ENCODE measurements at regions of chr6 and their contacts with region 1.

Region 1: DNA sequence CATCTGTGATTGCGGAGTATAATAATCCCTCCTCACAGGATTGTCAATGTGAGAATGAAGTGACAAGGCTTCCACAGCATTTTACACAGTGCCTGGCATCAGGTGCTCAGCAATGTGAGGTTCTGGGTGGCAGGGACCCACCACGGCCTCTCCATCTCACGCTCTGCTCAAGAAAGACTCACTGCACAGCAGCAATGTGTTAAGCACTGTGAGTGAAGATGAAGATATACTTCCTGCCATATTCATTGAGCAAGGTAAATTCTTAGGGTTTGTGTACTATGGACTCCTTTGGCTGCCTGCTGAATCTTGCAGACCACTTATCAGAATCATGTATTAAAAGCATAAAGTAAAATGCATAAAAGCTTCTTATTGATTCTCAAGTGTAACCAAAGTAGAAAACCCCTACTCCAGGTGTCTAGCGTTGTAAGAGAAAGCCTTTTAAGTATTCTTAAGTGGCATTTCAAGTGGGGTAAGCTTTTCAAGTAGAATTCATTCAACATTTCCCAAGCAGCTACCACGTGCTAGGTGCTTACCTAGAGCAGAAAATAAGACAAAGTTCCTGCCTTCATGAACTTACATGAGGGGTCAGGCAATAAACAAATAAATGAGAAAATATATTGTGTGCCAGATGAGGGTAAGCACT is 17.0 kb upstream of the MEP1A start:
- DNase-seq: no peak
- H3K4me3 ChIP-seq: no peak overlapping the region
- H3K27ac ChIP-seq: no peak overlapping the region
- H3K4me1 ChIP-seq: no peaks in the 10 kb centered on the region
- H3K27me3 ChIP-seq: no peaks in the 10 kb centered on the region
- CTCF ChIP-seq: no peak
- POLR2A ChIP-seq: no peak

Region 2: DNA sequence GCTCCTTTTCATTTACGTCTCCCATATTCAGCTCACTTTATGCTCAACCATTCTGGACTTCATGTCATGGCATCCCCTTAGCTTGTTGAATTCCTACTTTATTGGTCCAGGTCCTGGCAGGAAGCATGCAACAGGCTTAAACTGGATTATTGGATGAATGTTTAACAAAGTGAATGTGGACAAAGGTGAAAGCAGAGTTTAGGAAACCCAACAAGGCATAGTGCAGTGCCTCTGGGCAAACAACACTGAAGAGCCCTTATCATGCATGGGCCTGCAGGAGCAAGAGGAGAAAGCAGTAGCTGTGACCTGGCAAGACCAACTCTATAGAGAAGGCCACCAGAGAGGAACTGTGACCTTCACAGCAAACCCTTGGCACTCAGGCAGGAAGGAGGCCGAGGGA is 34.7 kb before region 1 on chr6:
- intact Hi-C with region 1: loop called (anchors 2 kb)
- DNase-seq: no peak
- H3K4me3 ChIP-seq: no peak overlapping the region
- H3K27ac ChIP-seq: no peak overlapping the region
- H3K4me1 ChIP-seq: no peaks in the 10 kb centered on the region
- H3K27me3 ChIP-seq: no peaks in the 10 kb centered on the region
- CTCF ChIP-seq: no peak
- POLR2A ChIP-seq: no peak

Measured in breast epithelium (tissue), 4 donors.